ENCODE measurements at regions of chr15 and their contacts with region 1.

Region 1: DNA sequence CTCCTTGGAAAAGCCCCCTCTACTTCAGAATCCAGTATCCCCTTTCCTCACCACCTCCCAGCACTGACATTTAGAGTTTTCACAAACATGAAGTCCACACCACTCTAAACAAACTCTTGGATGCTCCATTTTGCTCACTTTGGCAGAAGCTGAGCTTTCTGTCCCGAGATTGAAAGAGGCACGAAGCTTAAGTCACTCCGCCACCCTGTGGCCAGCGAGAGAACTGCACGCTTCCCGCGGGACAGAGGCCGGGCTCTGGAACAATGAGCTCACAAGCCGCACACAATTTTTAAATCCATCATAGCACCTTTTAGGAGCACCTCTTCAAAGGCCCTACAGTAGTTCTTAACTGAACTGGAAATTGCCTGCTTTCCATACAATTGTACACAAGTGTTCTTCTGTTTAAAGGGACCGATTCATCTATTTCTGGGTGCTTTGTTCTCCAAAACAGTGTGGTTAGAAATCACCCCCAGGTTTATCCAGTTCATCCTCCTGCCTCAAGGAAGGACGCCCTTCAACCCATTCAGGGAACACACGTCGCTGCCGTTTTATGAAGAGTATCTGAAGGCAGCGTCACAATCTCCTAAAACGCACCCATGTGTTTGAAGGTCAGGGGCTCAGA is 226.1 kb downstream of the VPS13C start:
- DNase-seq: peak; percentile 67 to 94 (median 83)
- H3K4me3 ChIP-seq: no peak overlapping the region
- H3K27ac ChIP-seq: no peak overlapping the region
- H3K4me1 ChIP-seq: no peaks in the 10 kb centered on the region
- H3K27me3 ChIP-seq: no peaks in the 10 kb centered on the region
- CTCF ChIP-seq: peak; percentile 84 to 98 (median 89)
- POLR2A ChIP-seq: no peak

Region 2: DNA sequence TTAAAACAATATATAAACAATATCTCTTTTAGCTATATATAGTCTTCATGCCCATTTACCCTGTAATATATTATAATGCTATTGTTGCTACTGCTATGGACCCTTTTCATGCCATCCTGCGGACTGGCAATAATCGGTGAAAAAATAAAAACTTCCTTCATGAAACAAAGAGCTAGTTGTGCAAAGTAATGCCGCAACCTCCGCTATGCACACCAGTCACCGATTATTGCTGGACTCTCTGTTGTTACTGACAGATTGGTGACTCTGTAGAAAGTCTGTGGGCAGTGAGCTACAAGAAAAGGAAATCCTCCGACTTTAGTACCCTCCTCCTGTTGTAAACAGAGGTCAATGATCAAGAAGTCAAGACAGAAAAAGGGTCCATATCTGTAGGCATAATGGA is 1337.3 kb before region 1 on chr15:
- intact Hi-C with region 1: loop called in 1 of 2 experiments (anchors 10 kb)
- DNase-seq: no peak
- H3K4me3 ChIP-seq: no peak overlapping the region
- H3K27ac ChIP-seq: no peak overlapping the region
- H3K4me1 ChIP-seq: no peaks in the 10 kb centered on the region
- H3K27me3 ChIP-seq: no peaks in the 10 kb centered on the region
- CTCF ChIP-seq: no peak
- POLR2A ChIP-seq: no peak

Region 3: GRCh38 chr15:61796056-61796455 is 38.1 kb before region 1 on chr15:
- intact Hi-C with region 1: no loop called
- DNase-seq: no peak
- H3K4me3 ChIP-seq: no peak overlapping the region
- H3K27ac ChIP-seq: no peak overlapping the region
- H3K4me1 ChIP-seq: no peaks in the 10 kb centered on the region
- H3K27me3 ChIP-seq: no peaks in the 10 kb centered on the region
- CTCF ChIP-seq: no peak
- POLR2A ChIP-seq: no peak